PC-3 (cell line): ENCODE measurements at regions of chr13 and their contacts with region 1.

Region 1: DNA sequence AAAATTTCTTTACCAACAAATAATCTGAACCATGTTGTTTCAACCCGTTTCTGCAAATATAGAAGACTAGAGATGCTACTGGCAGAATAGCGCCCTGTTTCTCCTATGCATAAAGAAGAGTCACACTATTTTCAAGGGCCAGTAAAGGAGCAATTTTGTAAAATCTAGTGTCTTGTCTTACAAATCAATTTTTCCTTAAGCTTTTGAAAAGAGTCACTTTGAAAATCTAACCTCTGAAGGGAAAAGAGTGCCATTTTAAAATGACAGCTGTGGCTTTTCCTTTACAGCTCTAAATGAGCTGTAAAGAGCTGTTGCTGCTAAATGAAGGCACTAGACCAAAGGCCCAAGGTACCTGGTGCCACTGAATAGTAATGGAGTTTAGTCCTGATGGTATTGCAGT is 16.9 kb upstream of the GTF2F2 start:
- DNase-seq: no peak
- ATAC-seq: no peak
- H3K4me3 ChIP-seq: no peak overlapping the region
- H3K27ac ChIP-seq: no peak overlapping the region
- H3K4me1 ChIP-seq: no peaks in the 10 kb centered on the region
- H3K27me3 ChIP-seq: no peaks in the 10 kb centered on the region
- CTCF ChIP-seq: no peak

Region 2: DNA sequence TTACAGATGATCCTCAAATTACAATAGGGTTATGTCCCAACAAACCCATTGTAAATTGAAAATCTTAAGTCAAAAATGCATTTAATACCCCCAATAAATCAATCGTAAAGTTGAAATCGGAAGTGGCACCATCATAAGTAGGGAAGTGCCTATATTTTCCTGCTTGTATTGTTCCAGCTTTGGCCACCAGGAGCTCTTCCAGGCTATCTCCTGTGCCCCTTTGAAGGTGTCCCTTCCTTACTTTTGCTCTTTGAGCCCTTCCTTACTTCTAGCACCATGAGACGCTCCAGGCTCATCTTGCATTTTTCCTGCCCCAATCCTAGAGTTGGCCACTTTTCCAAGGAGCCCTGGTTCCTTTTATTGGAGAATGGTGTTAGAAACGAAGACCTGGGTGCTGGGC is 364.3 kb before region 1 on chr13:
- CTCF ChIA-PET with region 1: no interaction called
- POLR2A ChIA-PET with region 1: no interaction called
- intact Hi-C with region 1: no loop called
- DNase-seq: no peak
- ATAC-seq: no peak
- H3K4me3 ChIP-seq: no peak overlapping the region
- H3K27ac ChIP-seq: no peak overlapping the region
- H3K4me1 ChIP-seq: peaks cover 10% of the 10 kb centered on the region
- H3K27me3 ChIP-seq: no peaks in the 10 kb centered on the region
- CTCF ChIP-seq: no peak; the same call in 1 of the 2 replicates

Region 3: GRCh38 chr13:45224176-45224575 is 120.7 kb after region 1 on chr13:
- CTCF ChIA-PET with region 1: no interaction called
- POLR2A ChIA-PET with region 1: no interaction called
- intact Hi-C with region 1: no loop called
- DNase-seq: no peak
- ATAC-seq: no peak
- H3K4me3 ChIP-seq: no peak overlapping the region
- H3K27ac ChIP-seq: no peak overlapping the region
- H3K4me1 ChIP-seq: peaks cover 19% of the 10 kb centered on the region
- H3K27me3 ChIP-seq: no peaks in the 10 kb centered on the region
- CTCF ChIP-seq: no peak

Region 4: DNA sequence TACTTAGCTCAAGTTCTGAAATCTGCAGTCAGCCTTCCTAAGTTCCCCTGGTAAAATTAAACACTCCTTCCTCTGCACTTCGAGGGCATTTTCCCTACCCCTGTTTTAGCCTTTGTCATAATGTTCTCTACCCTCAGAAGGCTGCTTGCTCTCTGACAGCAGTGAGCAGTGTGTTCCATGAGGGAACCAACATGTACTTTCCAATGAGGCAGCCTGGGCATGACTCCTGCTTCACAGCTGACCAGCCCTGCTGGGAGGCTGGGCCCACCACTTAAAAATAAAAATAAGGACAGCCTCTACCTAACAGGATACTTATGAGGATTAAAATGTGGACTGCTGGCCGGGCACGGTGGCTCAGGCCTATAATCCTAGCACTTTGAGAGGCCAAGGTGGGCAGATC is 1257.2 kb after region 1 on chr13:
- CTCF ChIA-PET with region 1: no interaction called
- POLR2A ChIA-PET with region 1: interaction called, 18 read pairs
- intact Hi-C with region 1: no loop called
- DNase-seq: no peak
- ATAC-seq: no peak
- H3K4me3 ChIP-seq: no peak overlapping the region
- H3K27ac ChIP-seq: no peak overlapping the region
- H3K4me1 ChIP-seq: peaks cover 16% of the 10 kb centered on the region
- H3K27me3 ChIP-seq: no peaks in the 10 kb centered on the region
- CTCF ChIP-seq: no peak